ENCODE measurements at regions of chr7 and their contacts with region 1.

Region 1: GRCh38 chr7:28626624-28627262 is 214.4 kb downstream of the CREB5 start:
- DNase-seq: peak; percentile 21 to 81
- H3K4me3 ChIP-seq: no peak overlapping the region
- H3K27ac ChIP-seq: no peak overlapping the region
- H3K4me1 ChIP-seq: peaks cover 0 to 5% (median 0%) of the 10 kb centered on the region in 4 experiments; a peak in 2 of 7 replicates
- H3K27me3 ChIP-seq: no peaks in the 10 kb centered on the region
- CTCF ChIP-seq: peak; percentile 44 to 74 (median 73)
- EP300 ChIP-seq: no peak
- POLR2A ChIP-seq: no peak
- RAD21 ChIP-seq: peak; percentile 68 to 81

Region 2: DNA sequence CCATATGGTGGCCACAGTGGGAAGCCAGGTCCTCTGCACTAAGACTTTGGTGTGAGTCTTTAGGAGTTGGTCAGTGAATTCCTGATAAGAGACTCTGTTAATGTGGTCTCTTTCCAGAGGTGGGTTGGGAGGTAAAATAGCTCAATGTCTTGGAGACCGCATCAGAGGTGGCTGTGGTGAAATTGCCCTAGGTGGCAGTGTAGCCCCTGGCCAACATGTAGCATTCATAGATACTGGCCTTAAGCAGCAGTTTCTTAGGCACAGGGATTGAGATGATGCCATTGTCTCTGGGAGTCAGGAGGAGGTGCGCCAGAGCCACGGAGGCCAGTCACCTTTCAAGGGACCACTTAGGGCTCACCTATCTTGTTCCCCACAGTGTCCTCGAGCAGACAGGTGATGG is 11.7 kb before region 1 on chr7:
- CTCF ChIA-PET with region 1: interaction called, 38 read pairs
- POLR2A ChIA-PET with region 1: interaction called, 3 read pairs
- DNase-seq: peak in 1 of 2 experiments; percentile 9
- H3K4me3 ChIP-seq: no peak overlapping the region
- H3K27ac ChIP-seq: no peak overlapping the region
- H3K4me1 ChIP-seq: peaks cover 0 to 2% (median 0%) of the 10 kb centered on the region in 4 experiments; a peak in 1 of 7 replicates
- H3K27me3 ChIP-seq: peaks cover 0 to 2% (median 0%) of the 10 kb centered on the region in 4 experiments; a peak in 1 of 7 replicates
- CTCF ChIP-seq: peak; percentile 47 to 68 (median 50)
- EP300 ChIP-seq: no peak
- POLR2A ChIP-seq: no peak
- RAD21 ChIP-seq: peak; percentile 59 to 76

Region 3: GRCh38 chr7:28643589-28644340 is 17.0 kb after region 1 on chr7:
- CTCF ChIA-PET with region 1: interaction called, 16 read pairs
- POLR2A ChIA-PET with region 1: no interaction called
- DNase-seq: peak in 1 of 2 experiments; percentile 38
- H3K4me3 ChIP-seq: no peak overlapping the region
- H3K27ac ChIP-seq: no peak overlapping the region
- H3K4me1 ChIP-seq: peaks cover 3 to 10% (median 6%) of the 10 kb centered on the region in 4 experiments; a peak in 3 of 7 replicates
- H3K27me3 ChIP-seq: no peaks in the 10 kb centered on the region
- CTCF ChIP-seq: no peak
- EP300 ChIP-seq: no peak
- POLR2A ChIP-seq: no peak
- RAD21 ChIP-seq: no peak

Region 4: DNA sequence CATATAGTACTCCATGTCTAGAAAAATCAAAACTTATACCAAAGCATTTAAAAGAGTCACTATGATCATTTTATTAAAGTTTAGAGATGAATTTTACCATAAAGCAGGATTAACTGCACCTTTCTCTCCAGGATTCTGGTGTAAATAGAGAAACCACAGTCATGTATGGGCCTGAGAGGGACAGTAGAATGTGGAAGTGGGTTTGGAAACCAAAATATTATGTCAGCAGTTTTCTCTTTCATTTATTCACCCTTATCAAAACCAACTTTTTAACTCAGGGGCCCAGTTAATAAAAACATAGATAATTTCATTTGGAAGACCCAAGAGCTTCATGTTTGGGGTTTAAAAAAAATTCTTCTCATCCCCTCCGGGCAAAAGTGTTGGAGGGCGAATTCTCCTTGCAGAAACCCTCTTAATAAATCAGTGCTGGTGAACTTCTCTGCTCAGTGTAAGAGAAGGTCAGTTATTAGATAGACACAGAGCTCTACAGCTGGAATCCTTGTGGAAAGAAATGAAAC is 51.8 kb after region 1 on chr7:
- CTCF ChIA-PET with region 1: no interaction called
- POLR2A ChIA-PET with region 1: no interaction called
- DNase-seq: no peak
- H3K4me3 ChIP-seq: no peak overlapping the region
- H3K27ac ChIP-seq: no peak overlapping the region
- H3K4me1 ChIP-seq: peaks cover 2 to 15% (median 7%) of the 10 kb centered on the region in 4 experiments
- H3K27me3 ChIP-seq: no peaks in the 10 kb centered on the region
- CTCF ChIP-seq: no peak
- EP300 ChIP-seq: no peak
- POLR2A ChIP-seq: no peak
- RAD21 ChIP-seq: no peak